Heart right ventricle (tissue), 16 donors: ENCODE measurements at regions of chr3 and their contacts with region 1.

Region 1: DNA sequence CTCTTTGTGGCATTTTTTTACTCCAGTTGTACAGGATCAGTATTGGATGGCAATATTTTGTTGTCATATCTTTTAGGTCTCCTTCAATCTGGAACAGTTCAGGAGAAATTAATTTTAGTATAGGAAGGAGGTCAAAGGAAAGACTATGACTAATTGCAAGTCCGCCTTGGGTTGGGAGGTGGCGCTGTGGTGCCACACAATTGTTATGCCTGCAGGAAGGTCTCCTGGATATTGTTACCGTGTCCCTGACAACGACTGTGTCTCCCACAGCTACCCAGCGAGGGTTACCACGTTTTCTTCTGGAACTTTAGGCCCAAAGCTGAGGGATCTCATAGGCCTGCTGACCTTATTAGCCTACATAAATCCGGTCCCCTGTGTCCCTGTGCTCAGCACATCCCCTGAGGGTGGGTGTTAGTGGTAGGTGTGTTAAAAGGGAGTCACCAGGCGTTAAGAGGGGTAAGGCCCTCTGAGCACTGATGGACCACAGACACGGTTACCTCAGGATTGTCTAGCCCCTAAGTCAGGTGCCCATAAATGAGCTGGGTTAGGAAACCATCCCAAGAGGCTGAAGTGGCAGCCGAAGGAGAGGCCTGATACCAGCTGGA is 31.5 kb downstream of the KCNAB1 start:
- DNase-seq: peak; percentile 53 to 69
- ATAC-seq: peak; percentile 39 to 81 (median 76)
- H3K4me3 ChIP-seq: no peak overlapping the region
- H3K27ac ChIP-seq: peak overlapping the region in 1 of 10 donors; percentile 73
- H3K4me1 ChIP-seq: peaks cover 6 to 42% (median 26%) of the 10 kb centered on the region in 9 donors
- H3K27me3 ChIP-seq: no peaks in the 10 kb centered on the region
- CTCF ChIP-seq: peak; percentile 34 to 84 (median 78)

Region 2: DNA sequence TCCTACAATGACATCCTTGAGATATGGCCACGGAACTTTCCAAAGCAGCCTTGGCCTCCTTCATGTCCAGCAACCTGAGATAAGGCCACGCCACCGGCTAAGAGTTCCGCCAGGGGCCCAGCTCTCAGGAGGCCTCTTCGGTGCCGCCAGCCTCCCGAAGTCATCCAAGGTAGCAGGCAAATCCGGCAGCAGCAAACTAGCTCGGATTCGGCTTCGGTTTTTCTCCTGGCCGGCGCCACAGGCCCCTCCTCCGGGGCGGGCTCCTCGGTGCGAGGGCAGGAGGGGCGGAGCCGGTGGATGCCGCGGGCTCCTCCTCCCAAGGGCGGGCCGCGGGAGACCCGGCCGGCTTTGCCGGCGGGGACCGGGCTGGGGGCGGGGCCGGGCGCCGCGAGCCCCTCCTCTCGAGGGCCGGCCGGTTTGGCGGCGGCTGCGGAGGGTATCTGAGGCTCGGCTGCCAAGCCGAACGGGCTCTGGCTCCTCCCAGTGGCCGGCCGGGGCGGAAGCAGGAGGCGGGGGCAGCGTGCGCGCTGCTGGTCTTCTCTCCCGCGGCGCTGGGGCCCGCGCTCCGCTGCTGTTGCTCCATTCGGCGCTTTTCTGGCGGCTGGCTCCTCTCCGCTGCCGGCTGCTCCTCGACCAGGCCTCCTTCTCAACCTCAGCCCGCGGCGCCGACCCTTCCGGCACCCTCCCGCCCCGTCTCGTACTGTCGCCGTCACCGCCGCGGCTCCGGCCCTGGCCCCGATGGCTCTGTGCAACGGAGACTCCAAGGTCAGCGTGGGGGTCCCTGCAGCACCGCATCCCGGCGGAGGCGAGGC is 281.6 kb before region 1 on chr3 and contains the start of gene GMPS:
- intact Hi-C with region 1: no loop called
- DNase-seq: peak; percentile 92 to 97
- ATAC-seq: peak; percentile 97 to 99 (median 98)
- H3K4me3 ChIP-seq: peak within 1 kb of the TSS; percentile 87 to 99 (median 97)
- H3K27ac ChIP-seq: peak within 1 kb of the TSS; percentile 60 to 97 (median 94)
- H3K4me1 ChIP-seq: peaks cover 0 to 34% (median 25%) of the 10 kb centered on the region in 9 donors
- H3K27me3 ChIP-seq: no peaks in the 10 kb centered on the region
- CTCF ChIP-seq: peak in 8 of 9 donors; percentile 49 to 75 (median 64)
- total RNA-seq, gene GMPS: 23.5 to 34.5 (median 30.6) TPM

Region 3: GRCh38 chr3:156050918-156051317 is 101.0 kb before region 1 on chr3:
- intact Hi-C with region 1: loop called in 3 of 10 experiments (anchors 5 to 10 kb)
- DNase-seq: no peak
- ATAC-seq: no peak
- H3K4me3 ChIP-seq: no peak overlapping the region
- H3K27ac ChIP-seq: no peak overlapping the region
- H3K4me1 ChIP-seq: no peaks in the 10 kb centered on the region
- H3K27me3 ChIP-seq: peaks cover 0 to 5% (median 0%) of the 10 kb centered on the region in 7 donors
- CTCF ChIP-seq: no peak

Region 4: DNA sequence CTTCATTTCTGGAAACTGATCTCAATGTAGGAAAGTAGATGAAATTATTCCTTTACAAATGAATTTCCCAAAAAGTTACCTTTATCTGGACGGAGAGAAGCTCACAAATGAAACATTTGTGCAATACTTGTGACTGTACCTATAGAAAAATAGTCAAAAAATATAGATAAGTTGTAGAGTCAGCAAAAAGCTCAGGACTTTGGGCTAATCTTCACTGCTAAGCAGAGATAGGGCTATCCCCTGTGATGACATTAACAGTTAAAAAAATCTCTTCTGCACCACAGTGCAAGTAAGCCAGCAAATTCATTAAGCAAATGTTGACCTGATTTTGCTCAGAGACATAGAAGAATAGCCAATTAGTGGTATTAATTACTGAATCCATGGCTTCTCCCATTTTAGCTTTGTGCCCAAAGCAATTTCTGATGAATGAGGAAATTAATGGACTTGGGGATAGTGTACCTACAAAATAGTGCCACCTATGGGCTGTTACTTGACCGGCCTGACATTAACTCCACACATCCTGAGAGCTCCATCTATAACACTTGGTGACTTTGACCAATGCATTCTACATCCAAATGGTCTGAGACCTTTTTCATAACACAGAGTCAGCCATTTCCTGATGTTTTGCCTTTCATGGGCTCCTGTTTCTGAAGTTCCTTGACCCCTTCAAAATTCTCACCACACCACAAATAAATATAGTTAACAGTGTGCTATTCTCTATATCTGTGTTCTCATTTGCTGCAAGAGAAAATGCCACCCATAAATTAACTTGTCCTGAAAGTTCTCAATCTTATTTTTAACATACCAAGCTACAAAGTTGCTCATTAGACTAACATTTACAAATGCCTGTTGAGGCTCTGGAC is 298.0 kb after region 1 on chr3:
- intact Hi-C with region 1: loop called in 8 of 10 experiments (anchors 1 to 10 kb)
- DNase-seq: no peak
- ATAC-seq: peak in 3 of 8 donors; percentile 64 to 75 (median 69)
- H3K4me3 ChIP-seq: no peak overlapping the region
- H3K27ac ChIP-seq: no peak overlapping the region
- H3K4me1 ChIP-seq: no peaks in the 10 kb centered on the region
- H3K27me3 ChIP-seq: no peaks in the 10 kb centered on the region
- CTCF ChIP-seq: peak; percentile 18 to 69 (median 58)

Region 5: GRCh38 chr3:156509189-156510174 is 357.6 kb after region 1 on chr3:
- intact Hi-C with region 1: loop called in 9 of 10 experiments (anchors 1 to 10 kb)
- DNase-seq: no peak
- ATAC-seq: peak; percentile 46 to 90 (median 77)
- H3K4me3 ChIP-seq: no peak overlapping the region
- H3K27ac ChIP-seq: no peak overlapping the region
- H3K4me1 ChIP-seq: no peaks in the 10 kb centered on the region
- H3K27me3 ChIP-seq: no peaks in the 10 kb centered on the region
- CTCF ChIP-seq: peak; percentile 36 to 79 (median 70)

Region 6: DNA sequence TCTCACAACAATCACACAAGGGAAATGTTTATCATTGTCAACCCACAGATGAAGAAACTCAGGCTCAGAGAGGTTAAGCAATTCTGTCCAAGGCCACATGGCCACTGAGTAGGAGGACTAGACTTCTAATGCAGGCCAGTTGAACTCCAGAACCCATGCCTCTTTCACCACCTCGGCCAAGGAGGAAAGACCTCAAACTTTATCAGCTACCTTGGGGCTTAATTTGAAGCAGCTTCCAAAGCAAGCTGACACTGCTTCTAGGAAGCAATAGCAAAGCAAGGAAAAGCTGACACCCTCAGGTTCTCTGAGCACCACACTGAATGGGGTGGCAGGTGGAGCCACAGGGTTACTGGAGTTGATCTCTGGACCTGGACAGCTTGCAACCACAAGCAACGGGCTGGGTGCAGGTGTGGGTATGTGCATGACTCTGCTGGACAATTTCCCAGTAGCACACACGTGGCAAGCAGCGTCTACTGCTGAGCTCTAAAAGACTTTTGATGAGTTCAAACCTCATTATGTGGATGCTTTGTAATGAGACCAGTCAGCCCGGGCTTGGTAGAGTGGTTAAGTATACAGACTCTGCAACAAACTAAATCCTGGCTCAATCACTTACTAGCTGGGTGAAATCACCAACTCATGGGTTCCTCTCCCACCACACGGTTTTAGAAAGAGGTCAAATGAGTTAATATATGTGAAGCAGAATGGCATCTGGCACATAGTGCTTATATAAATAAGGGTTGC is 984.9 kb after region 1 on chr3:
- intact Hi-C with region 1: loop called in 5 of 10 experiments (anchors 5 to 10 kb)
- DNase-seq: peak in 1 of 2 donors; percentile 20
- ATAC-seq: peak; percentile 18 to 49 (median 32)
- H3K4me3 ChIP-seq: peak overlapping the region in 1 of 10 donors; percentile 41
- H3K27ac ChIP-seq: peak overlapping the region; percentile 15 to 77 (median 58)
- H3K4me1 ChIP-seq: peaks cover 0 to 60% (median 39%) of the 10 kb centered on the region in 9 donors
- H3K27me3 ChIP-seq: no peaks in the 10 kb centered on the region
- CTCF ChIP-seq: no peak